Vagina (tissue), 2 donors: ENCODE measurements at regions of chr19 and their contacts with region 1.

Region 1: DNA sequence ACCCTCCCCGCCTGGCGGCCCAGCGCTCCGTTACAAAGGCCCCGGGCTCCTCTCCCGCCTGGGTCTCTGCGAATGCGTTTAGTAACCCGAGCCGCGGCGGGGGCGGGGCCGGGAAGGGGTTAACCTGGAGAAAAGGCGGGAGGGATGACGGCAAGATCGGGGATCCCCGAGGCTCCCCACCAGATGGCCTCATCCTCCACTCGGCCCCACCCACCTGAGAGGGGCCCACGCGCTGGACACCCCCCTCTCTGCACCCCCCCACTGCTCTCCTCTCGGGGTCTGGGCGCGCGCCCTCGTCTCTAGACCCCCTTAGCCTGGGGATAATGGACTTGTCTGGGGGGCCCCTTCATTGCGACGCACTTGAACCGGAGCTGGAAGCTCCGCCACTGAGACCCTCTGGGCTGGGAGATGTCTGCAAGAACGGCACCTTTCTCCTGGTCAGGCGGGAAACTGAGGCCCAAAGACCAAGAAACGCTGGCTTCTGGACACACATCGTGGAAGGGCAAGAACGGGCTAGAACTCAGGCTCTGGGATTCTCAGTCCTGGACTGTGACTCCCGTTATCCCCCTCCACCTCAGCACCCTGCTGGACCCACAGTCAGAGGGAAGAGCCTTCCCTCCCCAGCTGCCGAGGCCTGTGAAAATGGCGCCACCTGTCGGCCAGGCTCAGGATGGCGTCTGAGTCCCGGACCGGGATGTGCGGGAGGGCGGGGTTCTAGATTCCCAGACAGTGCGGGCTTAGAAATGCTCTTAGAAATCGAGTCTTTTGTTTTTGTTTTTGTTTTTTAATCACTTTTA is 2.9 kb upstream of the LTBP4 start:
- DNase-seq: no peak
- H3K4me3 ChIP-seq: peak overlapping the region; percentile 30 to 46
- H3K27ac ChIP-seq: peak overlapping the region; percentile 60
- H3K4me1 ChIP-seq: peaks cover 63% of the 10 kb centered on the region
- H3K27me3 ChIP-seq: no peaks in the 10 kb centered on the region
- CTCF ChIP-seq: peak; percentile 79 to 97 (median 95)
- POLR2A ChIP-seq: no peak

Region 2: DNA sequence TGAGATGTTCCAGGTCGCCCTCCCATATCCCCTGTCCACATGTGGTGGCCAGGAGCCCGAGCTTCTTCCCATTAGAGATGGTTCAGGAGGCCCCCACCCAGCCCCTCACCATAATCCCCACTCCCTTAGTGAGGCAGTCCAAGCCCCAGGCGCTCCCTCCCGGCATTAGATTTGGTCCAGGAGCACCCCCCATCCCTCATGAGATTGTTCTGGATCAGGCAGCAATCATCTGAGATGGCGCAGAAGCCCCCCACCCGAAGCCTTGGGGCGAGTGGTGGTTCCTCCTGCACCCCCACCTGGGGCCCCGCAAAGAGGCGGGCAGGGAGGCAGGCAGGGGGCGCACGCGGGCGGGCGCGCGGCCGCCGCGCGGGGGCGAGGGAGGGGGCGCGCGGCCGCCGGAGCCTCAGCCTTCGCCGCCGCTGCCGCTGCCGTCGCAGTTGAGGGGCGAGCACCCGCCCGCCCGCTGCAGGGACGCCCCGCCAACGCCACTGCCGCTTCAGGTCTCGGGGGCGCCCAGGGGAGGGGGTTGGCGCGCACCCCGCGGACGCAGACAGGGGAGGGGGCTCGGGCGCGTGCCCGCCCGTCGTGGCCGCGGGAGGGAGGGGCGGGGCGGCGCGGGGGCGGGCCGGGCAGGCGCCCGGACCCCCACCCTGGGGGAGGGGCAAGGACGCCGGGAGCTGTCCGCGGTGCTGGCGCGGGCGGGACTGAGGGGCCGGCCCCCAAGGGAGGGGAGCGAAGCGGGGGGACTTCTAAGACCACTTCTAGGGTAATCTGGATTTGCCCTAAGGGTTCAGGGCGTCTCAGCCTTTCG is 68.0 kb before region 1 on chr19:
- intact Hi-C with region 1: loop called (anchors 5 kb)
- DNase-seq: no peak
- H3K4me3 ChIP-seq: peak overlapping the region in 1 of 2 donors; percentile 39
- H3K27ac ChIP-seq: no peak overlapping the region
- H3K4me1 ChIP-seq: peaks cover 8% of the 10 kb centered on the region
- H3K27me3 ChIP-seq: no peaks in the 10 kb centered on the region
- CTCF ChIP-seq: no peak
- POLR2A ChIP-seq: no peak